GM12878 (cell line): ENCODE measurements at regions of chr1 and their contacts with region 1.

Region 1: GRCh38 chr1:27321813-27322577 is at the start of gene TMEM222:
- DNase-seq: peak; percentile 76
- ATAC-seq: peak; percentile 98
- H3K4me3 ChIP-seq: peak within 1 kb of the TSS; percentile 95
- H3K27ac ChIP-seq: peak within 1 kb of the TSS; percentile 96
- H3K4me1 ChIP-seq: no peaks in the 10 kb centered on the region
- H3K27me3 ChIP-seq: no peaks in the 10 kb centered on the region
- CTCF ChIP-seq: no peak
- EP300 ChIP-seq: peak in 1 of 2 experiments; percentile 63; a peak in 2 of 4 replicates
- POLR2A ChIP-seq: peak; percentile 93
- RAD21 ChIP-seq: no peak
- polyA plus RNA-seq, gene TMEM222: 3.8 to 7.8 TPM

Region 2: DNA sequence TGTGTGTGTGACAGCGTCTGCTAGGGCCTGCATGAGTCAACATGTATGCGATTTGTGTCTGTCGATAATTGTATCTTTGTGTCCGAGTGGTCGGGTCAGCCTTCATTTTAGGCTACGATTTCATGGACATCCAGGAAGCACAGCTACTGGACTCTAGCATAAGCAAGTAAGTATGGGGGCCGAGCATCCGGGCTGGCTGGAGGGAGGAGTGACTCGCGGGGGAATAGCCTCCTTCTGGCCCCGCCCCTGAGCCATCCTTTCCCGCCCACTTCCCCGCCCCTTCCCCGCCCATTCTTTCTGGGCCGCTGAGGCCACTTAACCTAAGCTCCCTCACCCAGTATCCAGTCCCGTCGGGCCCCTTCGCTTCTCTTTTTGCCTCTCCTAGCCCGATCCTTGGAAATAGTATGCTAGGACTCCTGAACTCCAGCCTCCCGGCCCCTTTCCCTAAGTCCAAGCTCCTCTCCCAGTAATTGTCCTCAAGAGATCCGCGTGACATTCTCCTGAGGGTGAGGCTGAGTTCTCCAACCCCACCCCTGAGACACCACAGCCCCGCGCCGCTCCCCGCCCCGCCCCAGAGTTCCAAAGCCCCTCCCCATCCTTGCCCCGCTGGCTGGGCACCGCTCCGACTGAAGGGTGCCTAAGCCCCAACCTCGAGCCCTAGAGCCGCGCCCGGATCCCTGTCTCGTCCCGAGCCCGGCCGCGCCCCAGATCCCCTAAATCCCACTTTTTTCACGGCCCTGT is 43.5 kb after region 1 on chr1:
- CTCF ChIA-PET with region 1: interaction called, 4 read pairs
- POLR2A ChIA-PET with region 1: no interaction called
- RAD21 ChIA-PET with region 1: no interaction called
- SMC1A ChIA-PET with region 1: interaction called, 7 read pairs
- in situ Hi-C with region 1: no loop called
- intact Hi-C with region 1: loop called (anchors 5 kb)
- DNase-seq: no peak
- ATAC-seq: peak; percentile 83
- H3K4me3 ChIP-seq: peak overlapping the region; percentile 76
- H3K27ac ChIP-seq: no peak overlapping the region
- H3K4me1 ChIP-seq: peaks cover 15% of the 10 kb centered on the region
- H3K27me3 ChIP-seq: no peaks in the 10 kb centered on the region
- CTCF ChIP-seq: no peak
- EP300 ChIP-seq: 0 out of 4 replicates have a peak, but pooled peaks of 1 of the 2 experiments have one; percentile 18
- POLR2A ChIP-seq: peak; percentile 50
- RAD21 ChIP-seq: no peak

Region 3: GRCh38 chr1:27379564-27380122 is 57.6 kb after region 1 on chr1:
- CTCF ChIA-PET with region 1: no interaction called
- POLR2A ChIA-PET with region 1: interaction called, 14 read pairs
- RAD21 ChIA-PET with region 1: no interaction called
- SMC1A ChIA-PET with region 1: no interaction called
- in situ Hi-C with region 1: no loop called
- intact Hi-C with region 1: no loop called
- DNase-seq: no peak
- ATAC-seq: no peak
- H3K4me3 ChIP-seq: no peak overlapping the region
- H3K27ac ChIP-seq: no peak overlapping the region
- H3K4me1 ChIP-seq: no peaks in the 10 kb centered on the region; the same call in 1 of the 2 replicates
- H3K27me3 ChIP-seq: peaks cover 0 to 2% of the 10 kb centered on the region in 2 experiments; a peak in 2 of 4 replicates
- CTCF ChIP-seq: no peak
- EP300 ChIP-seq: no peak
- POLR2A ChIP-seq: no peak
- RAD21 ChIP-seq: no peak

Region 4: GRCh38 chr1:27770293-27770830 is 448.4 kb after region 1 on chr1:
- CTCF ChIA-PET with region 1: no interaction called
- POLR2A ChIA-PET with region 1: no interaction called
- RAD21 ChIA-PET with region 1: no interaction called
- SMC1A ChIA-PET with region 1: no interaction called
- in situ Hi-C with region 1: no loop called
- intact Hi-C with region 1: no loop called
- DNase-seq: no peak
- ATAC-seq: no peak
- H3K4me3 ChIP-seq: no peak overlapping the region
- H3K27ac ChIP-seq: no peak overlapping the region
- H3K4me1 ChIP-seq: no peaks in the 10 kb centered on the region
- H3K27me3 ChIP-seq: no peaks in the 10 kb centered on the region
- CTCF ChIP-seq: no peak
- EP300 ChIP-seq: no peak
- POLR2A ChIP-seq: no peak
- RAD21 ChIP-seq: no peak